ENCODE measurements at regions of chr3 and their contacts with region 1.

Region 1: GRCh38 chr3:33883538-33883950 is 85.1 kb downstream of the PDCD6IP start:
- DNase-seq: no peak
- H3K4me3 ChIP-seq: peak overlapping the region in 1 of 4 experiments; percentile 36; a peak in 1 of 8 replicates
- H3K27ac ChIP-seq: no peak overlapping the region
- H3K4me1 ChIP-seq: peaks cover 3 to 12% (median 6%) of the 10 kb centered on the region in 4 experiments; a peak in 5 of 7 replicates
- H3K27me3 ChIP-seq: no peaks in the 10 kb centered on the region
- CTCF ChIP-seq: peak in 2 of 3 experiments; percentile 32 to 60; a peak in 2 of 4 replicates
- EP300 ChIP-seq: no peak
- POLR2A ChIP-seq: no peak
- RAD21 ChIP-seq: peak; percentile 69 to 75

Region 2: GRCh38 chr3:33858131-33858530 is 25.4 kb before region 1 on chr3:
- CTCF ChIA-PET with region 1: no interaction called
- POLR2A ChIA-PET with region 1: no interaction called
- DNase-seq: no peak
- H3K4me3 ChIP-seq: no peak overlapping the region
- H3K27ac ChIP-seq: no peak overlapping the region
- H3K4me1 ChIP-seq: peaks cover 0 to 4% (median under 1%) of the 10 kb centered on the region in 4 experiments; a peak in 3 of 7 replicates
- H3K27me3 ChIP-seq: no peaks in the 10 kb centered on the region
- CTCF ChIP-seq: no peak
- EP300 ChIP-seq: no peak
- POLR2A ChIP-seq: no peak
- RAD21 ChIP-seq: no peak

Region 3: GRCh38 chr3:33869977-33870376 is 13.6 kb before region 1 on chr3:
- CTCF ChIA-PET with region 1: interaction called, 13 read pairs
- POLR2A ChIA-PET with region 1: interaction called, 3 read pairs
- DNase-seq: no peak
- H3K4me3 ChIP-seq: no peak overlapping the region
- H3K27ac ChIP-seq: no peak overlapping the region
- H3K4me1 ChIP-seq: no peaks in the 10 kb centered on the region
- H3K27me3 ChIP-seq: no peaks in the 10 kb centered on the region
- CTCF ChIP-seq: no peak
- EP300 ChIP-seq: no peak
- POLR2A ChIP-seq: no peak
- RAD21 ChIP-seq: no peak

Region 4: DNA sequence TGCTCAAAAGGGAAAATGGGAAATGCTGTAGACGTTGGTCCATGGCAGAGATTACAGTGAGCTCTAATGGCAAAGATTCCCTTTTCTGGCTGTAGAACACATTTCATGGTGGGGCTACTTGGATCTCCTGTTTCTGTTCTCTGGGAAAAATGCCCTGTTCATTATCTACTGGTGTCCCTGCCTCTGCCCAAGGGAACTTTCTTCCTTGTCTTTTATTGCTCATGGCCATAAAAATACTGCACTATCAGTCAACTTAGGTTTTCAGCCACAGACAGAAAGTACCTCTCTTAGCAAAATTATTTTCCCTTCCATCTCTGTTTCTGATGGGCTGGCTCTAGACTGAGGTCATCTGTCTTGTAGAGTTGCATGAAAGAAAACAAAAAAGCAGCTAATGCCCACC is 13.8 kb after region 1 on chr3:
- CTCF ChIA-PET with region 1: interaction called, 18 read pairs
- POLR2A ChIA-PET with region 1: no interaction called
- DNase-seq: no peak
- H3K4me3 ChIP-seq: no peak overlapping the region
- H3K27ac ChIP-seq: no peak overlapping the region
- H3K4me1 ChIP-seq: no peaks in the 10 kb centered on the region
- H3K27me3 ChIP-seq: no peaks in the 10 kb centered on the region
- CTCF ChIP-seq: no peak
- EP300 ChIP-seq: no peak
- POLR2A ChIP-seq: no peak
- RAD21 ChIP-seq: no peak

Region 5: GRCh38 chr3:33915791-33916546 is 32.4 kb after region 1 on chr3:
- CTCF ChIA-PET with region 1: interaction called, 18 read pairs
- POLR2A ChIA-PET with region 1: no interaction called
- DNase-seq: peak in 1 of 2 experiments; percentile 5
- H3K4me3 ChIP-seq: no peak overlapping the region
- H3K27ac ChIP-seq: no peak overlapping the region
- H3K4me1 ChIP-seq: peaks cover 0 to 3% (median 0%) of the 10 kb centered on the region in 4 experiments; a peak in 1 of 7 replicates
- H3K27me3 ChIP-seq: no peaks in the 10 kb centered on the region
- CTCF ChIP-seq: peak; percentile 48 to 50 (median 49)
- EP300 ChIP-seq: no peak
- POLR2A ChIP-seq: no peak
- RAD21 ChIP-seq: peak; percentile 75 to 80

Region 6: GRCh38 chr3:34065901-34066300 is 182.4 kb after region 1 on chr3:
- CTCF ChIA-PET with region 1: no interaction called
- POLR2A ChIA-PET with region 1: no interaction called
- DNase-seq: no peak
- H3K4me3 ChIP-seq: no peak overlapping the region
- H3K27ac ChIP-seq: no peak overlapping the region
- H3K4me1 ChIP-seq: peaks cover 0 to 3% (median 2%) of the 10 kb centered on the region in 4 experiments; a peak in 3 of 7 replicates
- H3K27me3 ChIP-seq: no peaks in the 10 kb centered on the region
- CTCF ChIP-seq: no peak
- EP300 ChIP-seq: no peak
- POLR2A ChIP-seq: no peak
- RAD21 ChIP-seq: no peak

Region 7: DNA sequence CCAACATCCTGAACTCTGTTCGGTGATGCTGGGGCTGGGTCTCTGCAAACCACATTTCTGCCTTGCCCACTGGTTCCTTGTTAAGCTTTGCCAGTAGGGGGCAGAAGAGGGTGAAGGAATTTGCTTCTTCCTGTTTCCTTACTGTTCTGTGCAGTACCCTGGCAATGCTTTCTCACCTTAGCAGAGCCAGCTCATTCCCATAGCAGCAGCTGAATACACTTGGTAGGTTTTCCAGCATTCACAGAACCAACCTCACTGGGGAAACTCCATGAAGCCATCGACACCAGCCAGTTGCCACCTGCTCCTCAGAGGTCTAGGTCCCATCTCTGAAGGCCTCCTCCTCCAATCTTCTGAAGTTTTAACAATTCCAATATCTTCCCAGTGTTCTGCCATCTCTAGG is 223.3 kb after region 1 on chr3:
- CTCF ChIA-PET with region 1: interaction called, 20 read pairs
- POLR2A ChIA-PET with region 1: no interaction called
- DNase-seq: peak; percentile 58 to 73
- H3K4me3 ChIP-seq: no peak overlapping the region
- H3K27ac ChIP-seq: no peak overlapping the region
- H3K4me1 ChIP-seq: no peaks in the 10 kb centered on the region
- H3K27me3 ChIP-seq: no peaks in the 10 kb centered on the region
- CTCF ChIP-seq: peak; percentile 60 to 92 (median 80)
- EP300 ChIP-seq: no peak
- POLR2A ChIP-seq: no peak
- RAD21 ChIP-seq: peak; percentile 86 to 88

Region 8: GRCh38 chr3:34683851-34684250 is 800.3 kb after region 1 on chr3:
- CTCF ChIA-PET with region 1: interaction called, 20 read pairs
- POLR2A ChIA-PET with region 1: no interaction called
- DNase-seq: peak; percentile 41 to 79
- H3K4me3 ChIP-seq: no peak overlapping the region
- H3K27ac ChIP-seq: no peak overlapping the region
- H3K4me1 ChIP-seq: no peaks in the 10 kb centered on the region
- H3K27me3 ChIP-seq: no peaks in the 10 kb centered on the region
- CTCF ChIP-seq: peak; percentile 33 to 83 (median 66)
- EP300 ChIP-seq: no peak
- POLR2A ChIP-seq: no peak
- RAD21 ChIP-seq: peak; percentile 86 to 91